Posterior vena cava (tissue), 2 donors: ENCODE measurements at regions of chr16 and their contacts with region 1.

Region 1: DNA sequence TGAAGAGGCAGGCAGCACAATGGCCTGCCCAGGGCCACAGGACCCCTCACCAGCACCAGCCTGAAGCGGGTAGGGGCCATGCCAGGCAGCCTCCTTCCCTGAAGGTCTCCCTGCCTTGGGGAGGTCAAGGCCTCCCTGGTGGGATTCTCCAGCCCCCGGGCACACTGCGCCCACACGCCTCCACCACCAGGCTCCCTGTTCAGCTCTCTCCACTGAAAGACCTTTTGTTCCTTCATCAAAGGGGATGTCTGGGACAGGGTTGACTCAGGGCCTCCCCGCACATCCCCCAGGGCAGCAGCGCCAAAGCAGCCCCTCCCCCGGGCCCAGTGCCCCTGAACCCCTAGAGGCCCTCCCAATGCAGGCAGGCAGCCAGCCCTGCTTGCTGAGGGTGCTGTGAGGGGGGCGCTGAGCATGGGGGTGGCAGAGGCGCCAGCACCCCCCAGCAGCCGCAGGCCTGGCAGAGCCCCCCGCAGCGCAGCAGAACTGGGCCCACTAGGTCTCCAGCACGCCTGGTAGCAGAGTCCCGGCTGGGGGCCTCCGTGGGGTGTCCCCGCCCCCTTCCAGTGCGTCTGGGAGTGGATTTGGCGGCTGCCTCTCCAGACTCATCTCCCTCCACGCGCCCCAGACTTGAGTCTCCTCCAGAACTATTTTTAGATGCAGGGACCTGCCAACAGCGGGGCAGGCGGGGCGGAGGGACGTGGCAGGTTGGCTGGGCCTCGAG is 13.1 kb downstream of the BCAR1 start:
- DNase-seq: peak; percentile 91

Region 2: GRCh38 chr16:75319513-75320411 is 81.5 kb after region 1 on chr16:
- intact Hi-C with region 1: no loop called
- DNase-seq: no peak

Region 3: GRCh38 chr16:75385507-75386152 is 147.3 kb after region 1 on chr16:
- intact Hi-C with region 1: loop called (anchors 5 kb)
- DNase-seq: no peak